ENCODE measurements at regions of chr5 and their contacts with region 1.

Region 1: GRCh38 chr5:35926389-35927051 is 11.9 kb downstream of the CAPSL start:
- DNase-seq: peak; percentile 67
- H3K4me3 Mint-ChIP-seq: no peak overlapping the region
- H3K27ac Mint-ChIP-seq: no peak overlapping the region
- H3K4me1 Mint-ChIP-seq: peaks cover 30% of the 10 kb centered on the region
- H3K27me3 Mint-ChIP-seq: peaks cover 39% of the 10 kb centered on the region
- CTCF ChIP-seq: peak; percentile 91

Region 2: GRCh38 chr5:35096216-35096615 is 830.3 kb before region 1 on chr5:
- CTCF ChIA-PET with region 1: interaction called, 58 read pairs
- POLR2A ChIA-PET with region 1: no interaction called
- intact Hi-C with region 1: no loop called
- DNase-seq: no peak
- H3K4me3 Mint-ChIP-seq: no peak overlapping the region
- H3K27ac Mint-ChIP-seq: no peak overlapping the region
- H3K4me1 Mint-ChIP-seq: no peaks in the 10 kb centered on the region
- H3K27me3 Mint-ChIP-seq: no peaks in the 10 kb centered on the region
- CTCF ChIP-seq: no peak

Region 3: GRCh38 chr5:35294976-35295375 is 631.5 kb before region 1 on chr5:
- CTCF ChIA-PET with region 1: no interaction called
- POLR2A ChIA-PET with region 1: no interaction called
- intact Hi-C with region 1: no loop called
- DNase-seq: no peak
- H3K4me3 Mint-ChIP-seq: no peak overlapping the region
- H3K27ac Mint-ChIP-seq: no peak overlapping the region
- H3K4me1 Mint-ChIP-seq: no peaks in the 10 kb centered on the region
- H3K27me3 Mint-ChIP-seq: no peaks in the 10 kb centered on the region
- CTCF ChIP-seq: no peak

Region 4: DNA sequence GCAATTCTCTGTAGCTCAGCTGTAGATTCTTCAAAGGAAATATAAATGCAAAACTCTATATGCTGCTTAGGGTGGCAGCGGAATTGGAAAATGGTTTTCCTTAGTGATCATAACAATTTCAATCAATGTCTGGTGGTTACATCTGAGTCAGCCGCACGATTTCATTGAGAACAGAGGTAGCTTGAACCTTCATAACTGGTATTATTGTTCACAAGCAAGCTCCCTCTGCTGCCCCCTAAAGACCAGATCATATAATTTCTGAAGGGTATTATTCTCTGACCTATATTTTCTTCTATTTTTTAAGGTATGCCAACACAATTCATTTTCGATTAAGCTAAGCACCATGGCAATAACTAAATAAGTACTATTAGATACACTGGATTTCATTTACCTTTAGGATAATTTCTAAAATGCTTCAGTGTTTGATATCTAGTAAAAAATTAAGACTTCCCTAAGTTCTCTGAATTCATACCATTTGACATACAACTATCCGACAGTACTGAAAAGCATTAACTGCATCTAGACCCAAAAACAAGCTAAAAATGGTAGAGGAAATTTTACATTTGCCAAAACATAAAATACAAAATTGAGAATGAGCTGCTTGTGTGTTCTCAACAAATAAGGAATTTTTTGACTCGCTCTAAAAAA is 490.0 kb before region 1 on chr5:
- CTCF ChIA-PET with region 1: interaction called, 5 read pairs
- POLR2A ChIA-PET with region 1: no interaction called
- intact Hi-C with region 1: loop called (anchors 2 kb)
- DNase-seq: peak; percentile 77
- H3K4me3 Mint-ChIP-seq: no peak overlapping the region
- H3K27ac Mint-ChIP-seq: no peak overlapping the region
- H3K4me1 Mint-ChIP-seq: peaks cover 5% of the 10 kb centered on the region
- H3K27me3 Mint-ChIP-seq: peaks cover 30% of the 10 kb centered on the region
- CTCF ChIP-seq: peak; percentile 68

Region 5: DNA sequence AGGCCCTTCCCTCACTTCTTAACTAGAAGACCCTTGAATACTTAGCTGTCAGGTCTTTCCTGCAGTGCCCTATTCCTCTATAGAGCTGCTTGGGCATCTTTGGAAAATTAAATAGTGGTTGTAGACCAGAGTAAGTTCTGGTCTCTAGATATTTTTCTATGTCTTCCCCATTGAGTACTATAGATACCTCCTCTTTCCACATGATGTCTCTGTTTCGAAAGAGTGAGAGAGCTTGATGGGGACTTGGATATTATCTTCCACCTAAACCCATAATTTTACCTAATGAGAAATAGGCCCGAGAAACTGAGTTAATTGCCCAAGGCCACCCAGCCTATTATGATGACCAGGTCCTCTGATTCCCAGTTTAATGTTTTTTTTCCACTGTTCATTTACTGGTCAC is 268.6 kb before region 1 on chr5:
- CTCF ChIA-PET with region 1: interaction called, 233 read pairs
- POLR2A ChIA-PET with region 1: no interaction called
- intact Hi-C with region 1: no loop called
- DNase-seq: no peak
- H3K4me3 Mint-ChIP-seq: no peak overlapping the region
- H3K27ac Mint-ChIP-seq: no peak overlapping the region
- H3K4me1 Mint-ChIP-seq: no peaks in the 10 kb centered on the region
- H3K27me3 Mint-ChIP-seq: no peaks in the 10 kb centered on the region
- CTCF ChIP-seq: no peak

Region 6: DNA sequence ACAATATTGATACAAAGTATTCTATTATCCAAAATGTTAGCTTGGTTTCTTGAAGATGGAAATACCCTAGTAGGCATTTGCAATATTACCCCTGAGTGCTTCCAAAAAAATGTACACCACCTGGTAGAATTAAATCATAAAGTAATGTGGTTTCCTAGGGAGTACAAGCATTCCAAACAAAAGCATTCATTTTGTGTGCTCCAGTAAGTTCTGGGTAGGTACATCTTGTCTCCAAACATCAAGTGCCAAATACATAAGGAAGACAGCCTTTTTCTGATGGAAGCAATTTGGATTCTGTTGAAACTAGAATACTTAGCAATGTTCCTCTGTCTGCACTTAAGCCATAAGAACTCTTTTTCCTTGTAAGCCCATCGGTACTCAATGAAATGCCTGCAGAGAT is 143.0 kb before region 1 on chr5:
- CTCF ChIA-PET with region 1: interaction called, 160 read pairs
- POLR2A ChIA-PET with region 1: no interaction called
- intact Hi-C with region 1: no loop called
- DNase-seq: no peak
- H3K4me3 Mint-ChIP-seq: no peak overlapping the region
- H3K27ac Mint-ChIP-seq: no peak overlapping the region
- H3K4me1 Mint-ChIP-seq: peaks cover 18% of the 10 kb centered on the region
- H3K27me3 Mint-ChIP-seq: no peaks in the 10 kb centered on the region
- CTCF ChIP-seq: no peak

Measured in MCF 10A (cell line).